Pancreas (tissue), 10 donors: ENCODE measurements at regions of chr2 and their contacts with region 1.

Region 1: GRCh38 chr2:197191177-197191939 is 119.2 kb downstream of the ANKRD44 start:
- DNase-seq: no peak
- ATAC-seq: peak; percentile 60 to 85 (median 81)
- H3K4me3 ChIP-seq: no peak overlapping the region
- H3K27ac ChIP-seq: no peak overlapping the region
- H3K4me1 ChIP-seq: no peaks in the 10 kb centered on the region
- H3K27me3 ChIP-seq: no peaks in the 10 kb centered on the region
- CTCF ChIP-seq: peak; percentile 31 to 72 (median 58)

Region 2: GRCh38 chr2:196955036-196955435 is 236.3 kb before region 1 on chr2:
- intact Hi-C with region 1: no loop called
- DNase-seq: no peak
- ATAC-seq: no peak
- H3K4me3 ChIP-seq: no peak overlapping the region
- H3K27ac ChIP-seq: no peak overlapping the region
- H3K4me1 ChIP-seq: peaks cover 0 to 5% (median 0%) of the 10 kb centered on the region in 3 donors
- H3K27me3 ChIP-seq: no peaks in the 10 kb centered on the region
- CTCF ChIP-seq: no peak

Region 3: GRCh38 chr2:196967116-196967515 is 224.2 kb before region 1 on chr2:
- intact Hi-C with region 1: no loop called
- DNase-seq: no peak
- ATAC-seq: no peak
- H3K4me3 ChIP-seq: no peak overlapping the region
- H3K27ac ChIP-seq: peak overlapping the region in 1 of 4 donors; percentile 70
- H3K4me1 ChIP-seq: peaks cover 8 to 25% (median 22%) of the 10 kb centered on the region in 3 donors
- H3K27me3 ChIP-seq: no peaks in the 10 kb centered on the region
- CTCF ChIP-seq: no peak

Region 4: DNA sequence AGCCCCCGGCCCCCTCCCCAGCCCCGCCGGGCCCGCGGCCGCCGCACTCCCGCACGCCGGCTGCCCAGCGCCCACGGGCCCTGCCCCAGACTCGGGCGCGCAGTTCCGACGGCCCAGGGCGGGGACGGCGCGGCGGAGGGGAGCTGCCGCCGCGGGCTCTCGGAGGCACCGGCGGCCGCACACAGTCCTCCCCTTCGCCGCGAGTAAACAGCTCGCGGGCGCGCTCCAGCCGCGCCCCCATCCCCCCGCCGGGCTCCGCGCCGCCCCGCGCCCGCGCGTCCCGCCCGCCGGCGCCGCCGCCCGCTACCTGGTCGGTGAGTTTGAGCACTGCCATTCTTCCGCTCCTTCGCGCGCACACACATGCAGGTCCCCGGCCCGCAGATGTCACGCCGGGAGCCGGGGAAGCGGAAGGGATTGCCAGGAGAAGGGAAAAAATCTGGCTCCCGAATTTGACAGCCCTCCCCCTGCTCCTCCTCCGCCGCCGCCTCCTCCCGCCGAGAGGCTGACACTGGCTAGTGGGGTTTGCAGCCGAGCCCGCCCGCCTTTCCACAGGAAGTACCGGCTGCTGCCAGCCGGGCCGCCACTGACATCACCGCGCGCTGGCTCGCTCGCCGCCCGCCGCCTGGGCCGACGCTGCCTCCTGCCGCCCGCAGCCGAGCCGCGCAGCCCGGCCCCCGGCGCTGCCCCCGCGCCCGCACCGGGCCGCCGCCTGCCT is 119.1 kb after region 1 on chr2 and contains the start of gene ANKRD44:
- intact Hi-C with region 1: loop called in 2 of 3 experiments (anchors 10 kb)
- DNase-seq: peak; percentile 90 to 96 (median 92)
- ATAC-seq: peak; percentile 91 to 97 (median 94)
- H3K4me3 ChIP-seq: peak within 1 kb of the TSS; percentile 51 to 77 (median 72)
- H3K27ac ChIP-seq: peak within 1 kb of the TSS; percentile 60 to 89 (median 78)
- H3K4me1 ChIP-seq: peaks cover 6 to 22% (median 17%) of the 10 kb centered on the region in 3 donors
- H3K27me3 ChIP-seq: no peaks in the 10 kb centered on the region
- CTCF ChIP-seq: peak in 2 of 4 donors; percentile 7 to 21
- total RNA-seq, gene ANKRD44: 6.9 to 12.5 (median 8.5) TPM

Region 5: DNA sequence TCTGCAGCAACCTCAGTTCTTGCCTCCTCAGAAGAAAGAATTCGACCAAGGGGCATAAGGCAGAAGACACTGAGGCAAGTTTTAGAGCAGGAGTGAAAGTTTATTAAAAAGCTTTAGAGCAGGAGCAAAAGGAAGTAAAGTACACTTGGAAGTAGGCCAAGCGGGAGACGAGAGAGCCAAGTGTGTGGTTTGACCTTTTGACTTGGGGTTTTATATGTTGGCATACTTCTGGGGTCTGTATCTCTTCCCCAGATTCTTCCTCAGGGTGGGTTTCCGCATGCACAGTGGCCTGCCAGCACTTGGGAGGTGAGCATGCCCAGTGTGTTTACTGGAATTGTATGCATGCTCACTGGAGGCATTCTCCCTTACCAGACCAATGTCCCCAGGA is 178.6 kb after region 1 on chr2:
- intact Hi-C with region 1: loop called in 2 of 3 experiments (anchors 5 kb)
- DNase-seq: no peak
- ATAC-seq: no peak
- H3K4me3 ChIP-seq: no peak overlapping the region
- H3K27ac ChIP-seq: no peak overlapping the region
- H3K4me1 ChIP-seq: no peaks in the 10 kb centered on the region
- H3K27me3 ChIP-seq: no peaks in the 10 kb centered on the region
- CTCF ChIP-seq: no peak